Left cardiac atrium (tissue), 4 donors: ENCODE measurements at regions of chr11 and their contacts with region 1.

Region 1: GRCh38 chr11:94638902-94639373 is 71.8 kb downstream of the PIWIL4 start:
- DNase-seq: no peak
- ATAC-seq: peak; percentile 69 to 74

Region 2: GRCh38 chr11:94741022-94741679 is 102.2 kb after region 1 on chr11:
- intact Hi-C with region 1: loop called in 1 of 2 experiments (anchors 10 kb)
- DNase-seq: peak; percentile 45
- ATAC-seq: peak; percentile 83 to 89